CD4-positive, alpha-beta memory T cell (primary cell): ENCODE measurements at regions of chr1 and their contacts with region 1.

Region 1: DNA sequence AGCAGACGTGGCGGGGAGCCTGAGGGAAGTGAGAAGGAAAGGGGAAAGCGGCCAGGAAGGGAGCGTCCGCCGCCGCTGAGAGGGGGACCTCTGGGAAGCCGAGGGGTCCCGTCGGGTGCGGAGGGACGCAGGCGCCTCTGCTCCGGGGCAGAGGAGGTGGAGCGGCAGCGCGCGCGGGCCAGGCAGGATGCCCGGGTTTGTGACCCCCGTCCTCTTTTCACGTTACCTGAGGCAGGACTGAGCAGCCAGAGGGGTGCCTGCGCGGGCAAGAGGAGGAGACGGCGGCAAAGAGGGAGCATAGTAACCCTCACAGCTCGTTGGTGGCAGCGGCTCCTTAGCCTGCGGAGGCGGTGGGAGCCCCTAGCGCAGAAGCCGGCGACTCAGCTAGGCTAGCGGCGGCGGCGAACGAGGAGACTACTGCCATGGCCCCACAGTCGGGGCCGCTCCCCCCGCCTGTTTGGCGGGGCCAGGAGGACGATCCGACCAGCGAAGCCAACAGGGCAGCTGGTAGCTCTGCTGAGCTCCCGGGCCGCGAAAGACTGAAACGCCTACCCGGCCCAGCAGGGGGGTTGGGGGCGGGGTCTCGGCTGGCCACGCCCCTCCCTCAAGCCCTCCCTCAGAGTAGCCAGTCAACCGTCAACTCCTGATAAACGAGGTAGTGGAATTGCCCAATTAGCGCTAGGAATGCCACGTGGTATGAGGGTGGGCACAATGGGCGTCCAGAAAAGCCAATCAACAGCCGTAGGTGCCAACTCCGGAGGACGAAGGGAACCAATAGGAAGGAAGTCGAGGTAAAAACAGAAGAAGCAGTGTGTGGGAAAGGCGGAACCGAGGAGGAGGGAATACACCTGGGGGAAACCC is at the start of gene TESK2:
- DNase-seq: peak; percentile 97 to 100 (median 99)
- H3K4me3 ChIP-seq: peak within 1 kb of the TSS; percentile 71 to 79
- H3K4me3 Mint-ChIP-seq: no peak within 1 kb of the TSS
- H3K27ac ChIP-seq: peak within 1 kb of the TSS; percentile 68
- H3K27ac Mint-ChIP-seq: no peak within 1 kb of the TSS
- H3K4me1 ChIP-seq: peaks cover 22% of the 10 kb centered on the region
- H3K4me1 Mint-ChIP-seq: peaks cover 5 to 13% (median 10%) of the 10 kb centered on the region in 4 donors
- H3K27me3 ChIP-seq: no peaks in the 10 kb centered on the region
- H3K27me3 Mint-ChIP-seq: no peaks in the 10 kb centered on the region
- total RNA-seq, gene TESK2: 7.5 to 7.7 TPM

Region 2: GRCh38 chr1:44730741-44731512 is 759.9 kb before region 1 on chr1 and contains the start of gene RNU5D-1:
- CTCF ChIA-PET with region 1: interaction called, 36 read pairs
- POLR2A ChIA-PET with region 1: interaction called, 7 read pairs
- intact Hi-C with region 1: loop called (anchors 5 kb)
- DNase-seq: peak; percentile 90 to 94 (median 91)
- H3K4me3 ChIP-seq: peak within 1 kb of the TSS; percentile 31 to 39
- H3K4me3 Mint-ChIP-seq: peak within 1 kb of the TSS; percentile 54 to 93 (median 84)
- H3K27ac ChIP-seq: peak within 1 kb of the TSS; percentile 96
- H3K27ac Mint-ChIP-seq: peak within 1 kb of the TSS; percentile 97 to 100 (median 99)
- H3K4me1 ChIP-seq: peaks cover 22% of the 10 kb centered on the region
- H3K4me1 Mint-ChIP-seq: peaks cover 18 to 38% (median 24%) of the 10 kb centered on the region in 4 donors
- H3K27me3 ChIP-seq: no peaks in the 10 kb centered on the region
- H3K27me3 Mint-ChIP-seq: no peaks in the 10 kb centered on the region
- total RNA-seq, gene RNU5D-1: not detected

Region 3: DNA sequence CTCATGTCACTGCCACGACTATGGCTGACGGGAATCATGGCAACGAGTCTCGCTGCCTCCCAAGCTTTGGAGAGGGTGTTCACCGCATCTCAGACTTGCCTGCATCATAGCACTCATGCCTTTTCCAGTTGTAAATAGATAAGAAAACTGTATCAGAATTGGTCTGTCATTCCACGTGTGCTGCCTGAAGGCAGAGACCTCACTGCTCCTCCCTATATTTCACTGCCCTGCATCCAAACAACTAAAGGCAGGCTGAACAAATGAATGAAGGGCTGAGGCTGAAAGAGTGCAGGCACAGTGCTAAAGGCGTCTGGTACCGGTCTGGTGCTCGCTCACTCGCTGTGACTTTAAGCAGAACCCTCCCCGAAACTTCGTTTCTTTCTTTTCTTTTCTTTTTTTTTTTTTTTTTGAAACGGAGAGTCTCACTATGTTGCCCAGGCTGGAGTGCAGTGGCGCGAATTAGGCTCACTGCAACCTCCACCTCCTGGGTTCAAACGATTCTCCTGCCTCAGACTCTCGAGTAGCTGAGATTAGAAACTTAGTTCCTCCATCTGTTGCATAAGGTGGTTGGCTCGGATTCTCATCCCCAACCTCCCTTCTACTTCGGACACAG is 505.0 kb before region 1 on chr1:
- CTCF ChIA-PET with region 1: interaction called, 7 read pairs
- POLR2A ChIA-PET with region 1: interaction called, 3 read pairs
- intact Hi-C with region 1: loop called (anchors 1 kb)
- DNase-seq: no peak
- H3K4me3 ChIP-seq: peak overlapping the region; percentile 67 to 70
- H3K4me3 Mint-ChIP-seq: peak overlapping the region; percentile 98 to 100 (median 99)
- H3K27ac ChIP-seq: peak overlapping the region; percentile 59
- H3K27ac Mint-ChIP-seq: peak overlapping the region; percentile 34 to 99 (median 96)
- H3K4me1 ChIP-seq: peaks cover 11% of the 10 kb centered on the region
- H3K4me1 Mint-ChIP-seq: peaks cover 15 to 26% (median 21%) of the 10 kb centered on the region in 4 donors
- H3K27me3 ChIP-seq: no peaks in the 10 kb centered on the region
- H3K27me3 Mint-ChIP-seq: no peaks in the 10 kb centered on the region

Region 4: GRCh38 chr1:45359882-45360513 is 130.9 kb before region 1 on chr1:
- CTCF ChIA-PET with region 1: interaction called, 159 read pairs
- POLR2A ChIA-PET with region 1: interaction called, 5 read pairs
- intact Hi-C with region 1: loop called (anchors 1 kb)
- DNase-seq: peak in 4 of 5 donors; percentile 34 to 50 (median 48)
- H3K4me3 ChIP-seq: no peak overlapping the region
- H3K4me3 Mint-ChIP-seq: no peak overlapping the region
- H3K27ac ChIP-seq: no peak overlapping the region
- H3K27ac Mint-ChIP-seq: peak overlapping the region in 4 of 7 donors; percentile 5 to 66 (median 46)
- H3K4me1 ChIP-seq: peaks cover 4% of the 10 kb centered on the region
- H3K4me1 Mint-ChIP-seq: peaks cover 4 to 7% (median 4%) of the 10 kb centered on the region in 4 donors
- H3K27me3 ChIP-seq: no peaks in the 10 kb centered on the region
- H3K27me3 Mint-ChIP-seq: no peaks in the 10 kb centered on the region

Region 5: DNA sequence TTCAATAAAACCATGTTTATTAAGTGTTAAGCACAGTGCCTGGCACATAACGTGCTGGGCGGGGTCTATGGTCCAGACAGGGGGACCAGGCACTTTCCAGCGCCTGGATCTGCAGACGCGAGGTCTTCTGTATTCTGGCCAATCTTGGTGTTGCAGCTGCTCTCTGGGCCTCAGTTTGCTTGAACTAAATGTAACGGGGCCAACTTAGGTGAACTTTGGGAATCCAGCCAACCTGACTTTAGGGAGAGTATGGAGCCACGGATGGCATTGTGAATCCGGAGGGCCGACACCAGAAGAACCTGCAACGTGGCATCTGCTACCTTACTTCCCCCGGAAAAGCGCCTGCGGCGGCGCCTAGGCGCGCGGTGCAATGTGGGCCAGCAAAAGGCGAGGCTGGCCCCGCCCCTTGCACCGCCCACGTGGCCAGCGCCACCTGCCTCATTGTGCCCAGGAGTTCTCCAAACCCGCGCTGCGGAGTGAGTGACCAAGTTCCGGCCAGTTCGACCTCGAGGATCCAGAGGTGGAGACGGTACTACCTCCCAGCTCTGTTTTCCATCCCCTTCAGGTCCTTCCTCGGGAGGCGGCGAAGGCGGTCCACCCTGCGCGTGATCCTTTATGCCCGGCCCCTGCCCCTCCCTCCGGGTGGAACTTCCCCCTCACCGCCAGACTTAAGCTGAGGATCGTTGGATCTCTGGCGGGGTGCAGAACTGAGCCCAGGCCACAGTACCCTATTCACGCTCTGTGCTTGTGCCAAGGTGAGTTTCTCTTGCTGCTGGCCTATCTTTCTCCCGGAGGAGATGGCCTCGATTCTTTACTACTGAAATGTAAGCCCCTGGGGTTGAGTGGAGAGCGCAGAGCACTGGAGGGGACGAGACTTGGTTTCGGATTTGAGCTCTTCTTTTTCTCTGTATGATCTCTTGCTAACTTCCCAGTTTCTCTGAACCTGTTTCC is 59.8 kb after region 1 on chr1 and contains the start of gene AKR1A1:
- CTCF ChIA-PET with region 1: interaction called, 6 read pairs
- POLR2A ChIA-PET with region 1: interaction called, 10 read pairs
- intact Hi-C with region 1: no loop called
- DNase-seq: peak; percentile 86 to 89 (median 88)
- H3K4me3 ChIP-seq: peak within 1 kb of the TSS; percentile 82 to 87
- H3K4me3 Mint-ChIP-seq: peak within 1 kb of the TSS; percentile 95 to 98 (median 96)
- H3K27ac ChIP-seq: peak within 1 kb of the TSS; percentile 79
- H3K27ac Mint-ChIP-seq: peak within 1 kb of the TSS; percentile 92 to 98 (median 97)
- H3K4me1 ChIP-seq: peaks cover 23% of the 10 kb centered on the region
- H3K4me1 Mint-ChIP-seq: peaks cover 14 to 31% (median 22%) of the 10 kb centered on the region in 4 donors
- H3K27me3 ChIP-seq: no peaks in the 10 kb centered on the region
- H3K27me3 Mint-ChIP-seq: no peaks in the 10 kb centered on the region
- total RNA-seq, gene AKR1A1: 84.3 to 89.8 TPM

Region 6: GRCh38 chr1:45864167-45865106 is 373.6 kb after region 1 on chr1:
- CTCF ChIA-PET with region 1: no interaction called
- POLR2A ChIA-PET with region 1: no interaction called
- intact Hi-C with region 1: no loop called
- DNase-seq: no peak
- H3K4me3 ChIP-seq: no peak overlapping the region
- H3K4me3 Mint-ChIP-seq: peak overlapping the region in 6 of 8 donors; percentile 43 to 76 (median 72)
- H3K27ac ChIP-seq: no peak overlapping the region
- H3K27ac Mint-ChIP-seq: peak overlapping the region in 2 of 7 donors; percentile 44 to 71
- H3K4me1 ChIP-seq: no peaks in the 10 kb centered on the region
- H3K4me1 Mint-ChIP-seq: peaks cover 0 to 12% (median 8%) of the 10 kb centered on the region in 4 donors
- H3K27me3 ChIP-seq: no peaks in the 10 kb centered on the region
- H3K27me3 Mint-ChIP-seq: no peaks in the 10 kb centered on the region